Heart right ventricle (tissue), 16 donors: ENCODE measurements at regions of chr1 and their contacts with region 1.

Region 1: GRCh38 chr1:33256701-33257399 is 558 bp downstream of the ZNF362 start:
- DNase-seq: peak; percentile 53 to 60
- ATAC-seq: peak; percentile 32 to 56 (median 40)
- H3K4me3 ChIP-seq: peak overlapping the region; percentile 61 to 86 (median 75)
- H3K27ac ChIP-seq: peak overlapping the region; percentile 79 to 94 (median 88)
- H3K4me1 ChIP-seq: peaks cover 35 to 56% (median 53%) of the 10 kb centered on the region in 9 donors
- H3K27me3 ChIP-seq: no peaks in the 10 kb centered on the region
- CTCF ChIP-seq: no peak

Region 2: GRCh38 chr1:33086384-33086850 is 170.4 kb before region 1 on chr1:
- intact Hi-C with region 1: no loop called
- DNase-seq: peak; percentile 66 to 76
- ATAC-seq: peak; percentile 66 to 88 (median 84)
- H3K4me3 ChIP-seq: no peak overlapping the region
- H3K27ac ChIP-seq: no peak overlapping the region
- H3K4me1 ChIP-seq: peaks cover 0 to 20% (median 9%) of the 10 kb centered on the region in 9 donors
- H3K27me3 ChIP-seq: peaks cover 0 to 10% (median 0%) of the 10 kb centered on the region in 7 donors
- CTCF ChIP-seq: peak; percentile 62 to 89 (median 78)

Region 3: DNA sequence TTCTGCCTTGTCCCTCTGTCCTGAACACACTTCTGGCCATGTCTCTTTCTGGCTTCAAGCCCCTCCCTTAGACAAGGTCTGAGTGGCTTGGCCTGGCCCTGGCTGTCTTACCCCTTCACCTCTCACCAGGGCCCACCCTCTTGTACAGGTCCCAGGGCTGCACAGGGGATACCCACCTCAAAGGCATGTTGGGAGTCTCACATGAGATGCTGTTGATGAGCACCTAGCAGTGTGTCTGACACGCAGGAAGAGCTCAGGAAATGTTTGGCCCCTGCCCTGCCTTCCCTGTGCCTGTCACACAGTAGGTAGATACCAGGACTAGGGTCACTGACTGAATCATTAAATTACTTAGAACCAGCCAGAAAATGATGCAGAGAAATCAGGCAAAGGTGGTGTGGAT is 16.1 kb after region 1 on chr1:
- intact Hi-C with region 1: loop called in 1 of 10 experiments (anchors 1 kb)
- DNase-seq: no peak
- ATAC-seq: no peak
- H3K4me3 ChIP-seq: no peak overlapping the region
- H3K27ac ChIP-seq: peak overlapping the region in 1 of 10 donors; percentile 38
- H3K4me1 ChIP-seq: peaks cover 0 to 55% (median 32%) of the 10 kb centered on the region in 9 donors
- H3K27me3 ChIP-seq: no peaks in the 10 kb centered on the region
- CTCF ChIP-seq: no peak

Region 4: GRCh38 chr1:33548319-33548718 is 291.5 kb after region 1 on chr1:
- intact Hi-C with region 1: no loop called
- DNase-seq: no peak
- ATAC-seq: no peak
- H3K4me3 ChIP-seq: no peak overlapping the region
- H3K27ac ChIP-seq: no peak overlapping the region
- H3K4me1 ChIP-seq: no peaks in the 10 kb centered on the region
- H3K27me3 ChIP-seq: no peaks in the 10 kb centered on the region
- CTCF ChIP-seq: no peak